Heart left ventricle (tissue), 16 donors: ENCODE measurements at regions of chr6 and their contacts with region 1.

Region 1: DNA sequence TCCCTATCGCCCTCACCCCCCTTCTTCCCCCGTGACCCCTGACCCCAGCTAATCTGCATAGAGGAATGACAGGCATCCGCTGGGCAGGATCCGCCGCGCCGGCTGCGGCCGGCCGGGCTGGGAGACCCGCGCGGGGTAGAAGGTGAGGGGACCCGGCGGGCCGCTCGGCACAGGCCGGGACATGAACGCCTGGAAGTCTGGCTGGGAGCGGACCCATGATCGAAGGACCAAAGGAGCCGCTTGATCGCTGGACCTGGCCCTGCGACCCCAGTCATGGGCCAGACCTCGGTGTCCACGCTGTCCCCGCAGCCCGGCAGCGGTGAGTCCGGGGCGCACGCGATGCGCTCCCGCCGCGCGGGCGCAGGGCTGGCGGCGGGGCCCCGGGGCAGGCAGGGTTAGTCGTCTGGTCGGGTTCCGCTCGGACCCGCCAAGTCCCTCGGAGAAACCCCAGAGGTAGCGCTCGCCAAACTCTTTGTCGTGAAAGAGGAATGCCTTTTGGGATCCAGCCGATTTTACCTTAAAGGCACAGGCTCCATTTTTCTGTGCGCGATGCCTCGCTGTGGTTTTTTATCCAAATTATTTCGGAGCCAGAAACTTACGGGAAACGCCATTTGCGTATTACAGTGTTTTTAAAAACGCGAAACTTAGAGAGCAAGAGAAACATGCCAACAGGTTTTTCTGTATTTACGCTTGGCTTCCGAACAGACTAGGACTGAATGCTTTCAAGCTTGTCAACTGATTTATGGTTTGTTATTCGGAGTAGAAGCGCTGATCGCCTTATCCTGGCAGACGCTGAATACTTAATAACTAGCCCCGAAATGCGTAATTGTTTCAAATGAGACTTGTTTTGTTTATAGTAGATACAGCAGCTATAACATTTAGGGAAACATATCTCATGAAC is at the start of gene PHACTR2:
- DNase-seq: peak; percentile 85 to 90 (median 87)
- ATAC-seq: peak; percentile 84 to 96 (median 91)
- H3K4me3 ChIP-seq: peak within 1 kb of the TSS; percentile 49 to 97 (median 80)
- H3K27ac ChIP-seq: peak within 1 kb of the TSS; percentile 94 to 99 (median 96)
- H3K4me1 ChIP-seq: peaks cover 0 to 64% (median 37%) of the 10 kb centered on the region in 12 donors
- H3K27me3 ChIP-seq: no peaks in the 10 kb centered on the region
- CTCF ChIP-seq: no peak
- POLR2A ChIP-seq: peak in 1 of 2 donors; percentile 82
- total RNA-seq, gene PHACTR2: 47.8 to 101 (median 68.3) TPM

Region 2: GRCh38 chr6:143510991-143511891 is 166.9 kb before region 1 on chr6 and contains the start of gene FUCA2:
- intact Hi-C with region 1: loop called in 1 of 10 experiments (anchors 5 kb)
- DNase-seq: peak; percentile 94 to 96 (median 95)
- ATAC-seq: peak; percentile 82 to 93 (median 90)
- H3K4me3 ChIP-seq: peak within 1 kb of the TSS; percentile 47 to 92 (median 74)
- H3K27ac ChIP-seq: peak within 1 kb of the TSS; percentile 26 to 97 (median 90)
- H3K4me1 ChIP-seq: peaks cover 0 to 48% (median 31%) of the 10 kb centered on the region in 12 donors
- H3K27me3 ChIP-seq: no peaks in the 10 kb centered on the region
- CTCF ChIP-seq: peak in 1 of 12 donors; percentile 13
- POLR2A ChIP-seq: peak in 1 of 2 donors; percentile 65
- total RNA-seq, gene FUCA2: 18.0 to 68.6 (median 34.8) TPM

Region 3: GRCh38 chr6:143575440-143575839 is 102.7 kb before region 1 on chr6:
- intact Hi-C with region 1: loop called in 4 of 10 experiments (anchors 5 to 10 kb)
- DNase-seq: peak in 2 of 5 donors; percentile 57 to 60
- ATAC-seq: peak; percentile 55 to 91 (median 88)
- H3K4me3 ChIP-seq: no peak overlapping the region
- H3K27ac ChIP-seq: peak overlapping the region in 3 of 12 donors; percentile 35 to 60 (median 49)
- H3K4me1 ChIP-seq: peaks cover 0 to 5% (median 0%) of the 10 kb centered on the region in 12 donors
- H3K27me3 ChIP-seq: no peaks in the 10 kb centered on the region
- CTCF ChIP-seq: peak; percentile 80 to 96 (median 92)
- POLR2A ChIP-seq: no peak

Region 4: DNA sequence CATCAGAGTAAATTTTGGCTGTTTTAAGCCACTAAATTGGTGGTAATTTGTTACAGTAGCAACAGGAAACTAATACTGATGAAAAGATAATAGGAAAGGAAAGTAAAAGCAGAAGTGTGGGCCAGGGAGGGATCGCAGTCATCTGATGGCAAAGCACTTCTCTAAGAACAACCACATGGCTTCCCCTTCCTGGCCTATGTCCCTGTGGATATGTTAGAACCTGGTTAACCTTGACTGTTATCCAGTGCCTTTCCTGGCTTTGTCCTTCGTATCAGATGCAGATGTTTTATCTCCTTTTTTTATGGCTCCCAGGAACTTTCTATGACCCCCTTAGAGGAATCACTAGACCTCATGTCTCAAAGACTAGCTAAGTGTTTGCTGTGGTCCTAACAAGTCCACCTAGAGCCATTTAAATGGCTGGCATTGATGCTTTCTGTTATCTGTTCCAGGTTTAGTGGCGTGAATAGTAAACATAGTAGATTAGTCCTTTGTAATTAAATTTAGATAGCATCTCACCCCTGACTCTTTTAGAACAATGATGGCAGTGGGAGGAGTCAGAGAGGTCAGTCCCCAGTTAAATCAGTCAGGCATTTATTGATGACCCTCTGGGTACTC is 79.6 kb before region 1 on chr6:
- intact Hi-C with region 1: loop called in 1 of 10 experiments (anchors 5 kb)
- DNase-seq: peak in 1 of 5 donors; percentile 32
- ATAC-seq: peak; percentile 41 to 85 (median 52)
- H3K4me3 ChIP-seq: no peak overlapping the region
- H3K27ac ChIP-seq: peak overlapping the region in 6 of 12 donors; percentile 6 to 46 (median 26)
- H3K4me1 ChIP-seq: peaks cover 0 to 45% (median 21%) of the 10 kb centered on the region in 12 donors
- H3K27me3 ChIP-seq: no peaks in the 10 kb centered on the region
- CTCF ChIP-seq: no peak
- POLR2A ChIP-seq: no peak

Region 5: GRCh38 chr6:143734641-143735063 is 56.5 kb after region 1 on chr6:
- intact Hi-C with region 1: loop called in 1 of 10 experiments (anchors 5 kb)
- DNase-seq: no peak
- ATAC-seq: peak; percentile 35 to 76 (median 56)
- H3K4me3 ChIP-seq: no peak overlapping the region
- H3K27ac ChIP-seq: peak overlapping the region in 7 of 12 donors; percentile 12 to 65 (median 49)
- H3K4me1 ChIP-seq: peaks cover 0 to 62% (median 27%) of the 10 kb centered on the region in 12 donors
- H3K27me3 ChIP-seq: no peaks in the 10 kb centered on the region
- CTCF ChIP-seq: no peak
- POLR2A ChIP-seq: no peak

Region 6: GRCh38 chr6:144482142-144482541 is 804.0 kb after region 1 on chr6:
- intact Hi-C with region 1: no loop called
- DNase-seq: peak; percentile 69 to 77 (median 72)
- ATAC-seq: peak in 2 of 4 donors; percentile 23 to 41
- H3K4me3 ChIP-seq: no peak overlapping the region
- H3K27ac ChIP-seq: no peak overlapping the region
- H3K4me1 ChIP-seq: peaks cover 0 to 38% (median 21%) of the 10 kb centered on the region in 12 donors
- H3K27me3 ChIP-seq: no peaks in the 10 kb centered on the region
- CTCF ChIP-seq: peak; percentile 50 to 80 (median 66)
- POLR2A ChIP-seq: no peak